ENCODE measurements at regions of chr18 and their contacts with region 1.

Region 1: DNA sequence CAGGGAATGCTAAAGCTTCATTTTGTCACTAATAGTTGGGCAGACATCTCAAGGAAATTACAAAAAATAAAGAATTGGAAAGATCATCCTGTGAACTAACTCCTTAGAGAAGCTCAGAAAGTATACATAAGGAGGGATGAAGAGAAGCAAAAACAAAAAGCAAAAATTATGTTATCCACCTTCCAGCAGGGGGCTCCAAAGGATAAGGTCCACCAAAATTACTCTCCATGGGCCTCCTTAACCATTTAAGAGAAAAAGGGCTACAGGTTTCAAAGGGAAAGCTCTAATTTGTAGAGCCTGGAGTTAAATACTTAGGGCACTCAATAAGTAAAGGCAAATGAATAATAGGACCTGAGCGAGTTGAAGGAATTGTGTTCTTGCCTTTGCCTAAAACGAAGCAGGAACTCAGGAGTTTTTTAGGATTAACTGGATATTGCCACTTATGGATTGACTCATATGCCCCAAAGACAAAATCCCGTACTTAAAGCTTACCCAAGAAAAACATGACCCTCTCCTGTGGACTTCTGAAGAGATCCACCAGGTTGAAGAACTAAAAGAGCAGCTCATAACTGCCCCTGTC is 1167.9 kb downstream of the DSC3 start:
- DNase-seq: no peak
- H3K4me3 ChIP-seq: no peak overlapping the region
- H3K27ac ChIP-seq: no peak overlapping the region
- H3K27me3 ChIP-seq: no peaks in the 10 kb centered on the region
- CTCF ChIP-seq: peak; percentile 36 to 77 (median 60)

Region 2: GRCh38 chr18:30271716-30272115 is 397.1 kb after region 1 on chr18:
- intact Hi-C with region 1: loop called in 1 of 2 experiments (anchors 10 kb)
- DNase-seq: no peak
- H3K4me3 ChIP-seq: no peak overlapping the region
- H3K27ac ChIP-seq: no peak overlapping the region
- H3K27me3 ChIP-seq: no peaks in the 10 kb centered on the region
- CTCF ChIP-seq: no peak

Region 3: DNA sequence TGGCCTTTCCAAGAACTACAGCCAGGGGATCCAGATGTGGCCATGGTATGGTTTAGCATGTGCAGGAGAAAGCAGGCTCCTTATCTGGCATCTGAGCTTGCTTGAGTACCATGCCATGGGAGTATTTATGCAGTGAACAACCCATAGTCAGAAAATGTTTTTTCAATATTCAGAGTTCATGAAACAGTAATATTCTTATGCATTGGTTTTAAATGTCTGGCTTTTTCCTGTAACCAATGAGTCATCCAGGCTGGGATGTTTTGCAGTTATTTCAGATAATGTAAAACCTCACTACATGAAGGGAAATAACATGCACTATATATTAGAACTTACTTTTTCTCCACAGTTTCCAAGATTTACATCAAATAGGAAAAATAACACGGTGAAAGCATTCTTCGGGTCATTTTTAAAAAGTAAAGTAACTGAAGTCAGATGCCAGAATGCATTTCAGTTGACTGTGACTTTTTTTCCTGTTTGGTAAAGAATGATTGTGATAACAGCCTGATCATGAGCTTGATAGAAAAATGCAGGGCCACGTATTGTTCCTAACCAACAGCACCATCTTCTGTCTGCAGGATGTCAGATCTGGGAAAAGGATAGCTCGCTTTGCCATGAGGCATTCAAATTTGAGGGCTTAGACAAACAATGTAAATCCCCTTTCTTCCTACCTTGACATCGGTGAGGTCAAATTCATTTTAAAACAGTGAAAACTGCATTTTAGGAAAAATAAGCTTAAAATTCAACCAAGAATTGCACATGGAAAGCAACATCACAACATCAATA is 1015.1 kb after region 1 on chr18:
- intact Hi-C with region 1: loop called (anchors 5 to 10 kb)
- DNase-seq: peak in 2 of 10 donors; percentile 28 to 41
- H3K4me3 ChIP-seq: no peak overlapping the region
- H3K27ac ChIP-seq: no peak overlapping the region
- H3K27me3 ChIP-seq: no peaks in the 10 kb centered on the region
- CTCF ChIP-seq: peak in 55 of 56 donors; percentile 31 to 76 (median 60)

Region 4: DNA sequence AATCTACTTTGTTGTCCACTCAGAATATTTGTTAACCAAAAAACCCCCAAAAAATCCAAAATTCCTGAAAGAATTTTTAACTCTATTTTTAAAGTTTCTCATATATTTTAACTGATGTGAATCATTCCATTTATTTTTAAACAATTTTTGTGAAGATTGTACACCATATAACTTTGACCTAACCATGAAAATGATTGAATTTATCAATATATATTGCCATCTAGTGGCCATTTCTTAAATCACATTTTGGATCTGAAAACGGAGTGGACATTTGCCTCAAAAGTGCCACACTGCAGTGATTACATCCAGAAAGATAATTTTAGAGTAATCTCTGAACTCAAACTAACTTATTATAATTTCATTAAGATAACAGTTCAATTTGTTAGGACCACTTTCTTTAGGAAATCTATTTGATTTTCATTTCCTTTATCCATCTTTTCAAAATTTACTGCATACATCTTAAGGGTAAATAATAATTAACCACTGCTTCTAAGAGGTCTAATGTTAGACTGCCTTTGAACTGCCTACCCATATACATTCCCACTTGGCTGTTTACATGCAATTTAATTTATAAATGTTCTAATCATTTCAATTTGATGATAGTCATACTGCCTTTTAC is 1096.8 kb after region 1 on chr18:
- intact Hi-C with region 1: loop called in 1 of 2 experiments (anchors 10 kb)
- DNase-seq: no peak
- H3K4me3 ChIP-seq: no peak overlapping the region
- H3K27ac ChIP-seq: no peak overlapping the region
- H3K27me3 ChIP-seq: peaks cover 0 to 7% (median 0%) of the 10 kb centered on the region in 45 donors
- CTCF ChIP-seq: peak; percentile 59 to 89 (median 76)

Measured in dorsolateral prefrontal cortex (tissue), 120 donors.